HEK293T (cell line): ENCODE measurements at regions of chr4 and their contacts with region 1.

Region 1: DNA sequence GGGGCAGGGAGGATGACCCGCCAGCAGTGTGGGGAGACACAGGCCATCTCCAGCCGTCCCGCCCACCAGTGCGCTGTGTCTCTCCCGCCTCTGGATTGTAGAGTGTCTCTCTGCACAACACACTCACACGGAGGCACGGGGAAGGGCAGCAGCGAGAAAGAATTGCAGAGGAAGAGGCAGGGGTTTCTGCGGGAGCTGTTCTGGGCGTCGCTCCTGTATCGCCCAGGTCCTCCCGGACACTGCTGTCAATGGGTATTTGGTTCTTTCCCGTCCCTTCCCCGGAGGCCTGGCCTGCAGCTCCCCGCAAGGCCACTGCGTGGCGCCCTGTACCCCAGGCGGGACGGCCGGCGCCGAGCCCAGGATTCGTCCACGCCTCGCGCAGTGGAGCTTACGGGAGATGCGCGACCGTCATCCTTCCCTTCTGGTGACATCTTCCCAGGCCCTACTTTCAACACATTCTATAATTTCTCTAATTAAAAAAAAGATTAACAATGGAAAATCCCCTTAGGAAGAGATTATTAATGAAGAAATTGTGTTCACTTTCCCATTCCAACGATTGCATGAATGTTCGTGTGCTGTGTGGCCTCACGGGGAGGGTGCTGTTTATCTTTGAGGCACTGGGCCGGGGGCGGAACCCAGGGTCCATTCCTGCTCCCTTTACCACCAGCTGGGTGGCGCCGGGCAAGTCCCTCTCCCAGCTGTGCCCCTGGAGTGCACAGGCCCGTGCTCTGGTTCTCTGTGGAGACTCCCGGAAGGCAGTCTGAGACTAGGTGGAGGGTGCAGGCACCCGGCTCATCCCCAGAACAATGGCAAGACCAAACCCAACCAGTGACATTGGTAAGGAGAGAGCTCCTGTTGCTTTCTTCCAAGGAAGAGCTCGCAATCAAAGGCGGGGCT is 95.7 kb downstream of the CPZ start:
- DNase-seq: peak; percentile 89

Region 2: DNA sequence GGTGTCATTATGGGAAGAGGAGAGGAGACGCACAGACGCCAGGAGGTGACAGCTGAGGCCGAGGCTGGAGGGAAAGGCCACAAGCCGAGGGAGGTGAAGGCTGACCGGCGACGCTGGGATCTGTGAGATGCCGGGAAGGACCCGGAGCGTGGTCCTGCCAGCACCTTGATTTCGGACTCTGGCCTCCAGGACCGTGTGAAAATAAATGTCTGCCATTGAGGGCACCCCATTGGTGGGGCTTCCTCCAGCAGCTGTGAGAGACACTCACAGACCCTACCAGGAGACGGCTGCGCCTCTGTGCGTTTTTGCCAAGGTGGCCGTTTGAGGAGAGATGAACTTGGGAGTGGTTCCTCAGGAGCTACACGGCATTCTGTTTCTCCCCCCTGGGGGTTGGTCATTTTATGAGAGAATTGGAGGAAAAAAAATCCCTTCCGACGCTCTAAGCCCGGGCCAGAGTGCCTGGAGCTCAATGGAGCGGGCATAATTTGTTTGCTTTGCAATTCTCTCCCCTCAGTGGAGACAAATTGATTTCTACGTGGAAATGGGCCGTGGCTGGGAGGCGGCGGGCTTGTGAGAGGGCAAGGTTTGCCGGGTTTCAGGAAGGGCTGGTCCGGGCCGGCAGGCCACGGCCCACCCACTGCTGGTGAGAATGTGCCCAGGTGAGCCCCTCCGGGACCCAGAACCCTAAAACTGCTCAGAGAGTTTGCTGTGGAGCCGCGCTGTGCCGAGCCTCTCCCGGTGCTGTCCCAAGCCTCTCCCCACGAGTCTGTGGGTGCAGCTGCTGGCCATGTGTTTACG is 41.8 kb before region 1 on chr4:
- CTCF ChIA-PET with region 1: no interaction called
- POLR2A ChIA-PET with region 1: no interaction called
- DNase-seq: peak; percentile 60

Region 3: GRCh38 chr4:8886612-8887406 is 198.5 kb after region 1 on chr4:
- CTCF ChIA-PET with region 1: interaction called, 13 read pairs
- POLR2A ChIA-PET with region 1: interaction called, 4 read pairs
- DNase-seq: no peak

Region 4: DNA sequence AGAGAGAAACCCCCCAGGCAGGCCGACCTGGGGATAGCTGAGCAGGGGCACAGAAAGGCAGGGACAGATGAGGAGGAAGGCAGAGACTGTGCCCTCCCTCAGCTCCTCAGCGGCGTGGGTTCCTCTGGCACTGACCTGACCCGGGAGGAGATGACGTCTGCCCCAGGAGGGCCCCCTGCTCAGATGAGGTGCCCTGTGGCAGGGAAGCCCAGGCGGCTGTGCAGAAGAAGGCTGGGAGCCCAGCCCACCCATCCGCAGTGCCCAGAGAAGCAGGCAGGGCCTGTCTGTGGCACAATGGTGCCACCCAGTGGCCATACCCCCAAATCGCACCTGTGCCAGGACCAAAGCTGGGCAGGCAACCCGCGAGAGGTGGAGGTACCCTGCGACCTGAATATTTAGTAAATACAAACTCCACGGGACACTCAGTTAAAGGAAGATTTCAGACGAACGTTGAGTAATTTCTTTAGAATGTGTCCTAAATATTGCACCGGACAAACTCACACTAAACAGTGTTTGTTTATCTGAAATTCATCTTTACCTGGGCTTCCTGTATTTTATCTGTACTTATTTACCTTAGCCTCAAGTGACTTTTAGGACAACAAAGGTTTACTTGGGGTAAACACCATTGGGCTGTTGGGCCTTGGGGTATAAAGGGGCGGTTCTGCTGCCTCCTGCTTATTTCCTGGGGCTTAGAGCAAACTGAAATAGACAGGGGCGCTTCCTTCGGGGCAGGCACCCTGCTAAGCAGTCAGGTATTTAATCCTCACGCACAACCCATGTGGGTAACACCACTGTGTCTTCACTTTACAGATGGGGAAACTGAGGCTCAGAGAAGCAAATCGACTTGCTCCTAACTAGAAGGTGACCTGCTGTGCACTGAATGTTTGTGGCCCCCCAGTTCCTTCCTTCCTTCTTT is 229.8 kb after region 1 on chr4:
- CTCF ChIA-PET with region 1: interaction called, 20 read pairs
- POLR2A ChIA-PET with region 1: no interaction called
- DNase-seq: peak; percentile 89